ENCODE measurements at regions of chr17 and their contacts with region 1.

Region 1: GRCh38 chr17:76278952-76279741 is 14.0 kb downstream of the UBALD2 start:
- DNase-seq: peak; percentile 97
- ATAC-seq: peak; percentile 94
- H3K4me3 ChIP-seq: no peak overlapping the region
- H3K27ac ChIP-seq: no peak overlapping the region
- H3K4me1 ChIP-seq: peaks cover 13% of the 10 kb centered on the region
- H3K27me3 ChIP-seq: no peaks in the 10 kb centered on the region
- CTCF ChIP-seq: peak; percentile 99

Region 2: DNA sequence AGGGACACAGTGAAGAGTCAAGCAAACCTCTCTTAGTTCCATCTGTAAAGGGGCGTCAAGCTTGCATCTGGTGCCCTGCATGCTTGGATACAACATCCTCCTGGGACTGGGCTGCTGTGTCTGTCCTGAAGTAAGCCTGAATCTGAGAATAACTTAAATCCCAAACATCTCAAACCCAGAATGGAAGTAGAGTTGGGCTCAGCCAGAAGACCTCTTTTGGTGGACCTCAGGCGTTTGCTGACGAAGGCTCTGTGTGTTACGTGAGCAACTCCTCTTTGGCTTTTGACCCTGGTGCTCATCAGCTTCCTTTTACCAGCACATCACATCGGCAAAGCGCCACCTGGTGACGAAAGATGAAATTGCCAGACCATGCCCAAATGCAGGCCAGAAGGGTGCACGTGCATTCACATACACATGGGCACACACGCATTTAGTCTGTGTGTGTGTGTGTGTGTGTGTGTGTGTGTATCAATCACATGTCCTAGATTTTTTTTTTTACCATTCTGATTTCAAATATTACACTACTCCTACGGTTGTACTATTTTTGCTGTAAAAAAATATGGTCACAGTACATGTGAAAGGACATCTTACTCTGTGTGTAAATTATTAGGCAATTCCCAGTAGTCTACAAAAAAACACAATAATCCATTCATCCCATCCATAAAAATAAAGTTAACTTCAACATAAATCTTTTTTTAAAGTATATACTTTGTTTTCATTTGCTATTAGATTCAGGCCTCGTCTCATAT is 97.0 kb before region 1 on chr17:
- CTCF ChIA-PET with region 1: interaction called, 13 read pairs
- POLR2A ChIA-PET with region 1: no interaction called
- intact Hi-C with region 1: no loop called
- DNase-seq: peak; percentile 98
- ATAC-seq: peak; percentile 93
- H3K4me3 ChIP-seq: no peak overlapping the region
- H3K27ac ChIP-seq: no peak overlapping the region
- H3K4me1 ChIP-seq: peaks cover 7% of the 10 kb centered on the region
- H3K27me3 ChIP-seq: no peaks in the 10 kb centered on the region
- CTCF ChIP-seq: peak; percentile 97

Region 3: DNA sequence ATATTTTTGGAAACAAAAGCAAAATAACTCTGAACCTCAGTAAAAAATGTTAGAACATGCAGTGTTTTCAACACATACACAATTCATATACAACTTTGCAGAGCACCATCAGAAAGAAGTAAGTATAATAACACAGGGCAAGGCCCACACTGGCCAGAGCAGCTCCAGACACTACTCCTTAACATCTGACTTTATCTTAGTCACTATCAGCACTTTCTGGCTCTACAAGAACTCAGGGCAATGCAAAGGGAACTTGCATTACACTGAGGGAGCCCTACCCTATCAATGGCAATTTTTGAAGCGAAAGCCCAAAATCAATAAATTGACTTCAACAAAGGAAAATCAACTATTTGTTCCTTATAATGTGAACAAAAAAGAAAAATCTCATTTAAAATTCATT is 55.3 kb before region 1 on chr17:
- CTCF ChIA-PET with region 1: no interaction called
- POLR2A ChIA-PET with region 1: no interaction called
- intact Hi-C with region 1: no loop called
- DNase-seq: no peak
- ATAC-seq: no peak
- H3K4me3 ChIP-seq: no peak overlapping the region
- H3K27ac ChIP-seq: no peak overlapping the region
- H3K4me1 ChIP-seq: no peaks in the 10 kb centered on the region
- H3K27me3 ChIP-seq: no peaks in the 10 kb centered on the region
- CTCF ChIP-seq: no peak

Region 4: DNA sequence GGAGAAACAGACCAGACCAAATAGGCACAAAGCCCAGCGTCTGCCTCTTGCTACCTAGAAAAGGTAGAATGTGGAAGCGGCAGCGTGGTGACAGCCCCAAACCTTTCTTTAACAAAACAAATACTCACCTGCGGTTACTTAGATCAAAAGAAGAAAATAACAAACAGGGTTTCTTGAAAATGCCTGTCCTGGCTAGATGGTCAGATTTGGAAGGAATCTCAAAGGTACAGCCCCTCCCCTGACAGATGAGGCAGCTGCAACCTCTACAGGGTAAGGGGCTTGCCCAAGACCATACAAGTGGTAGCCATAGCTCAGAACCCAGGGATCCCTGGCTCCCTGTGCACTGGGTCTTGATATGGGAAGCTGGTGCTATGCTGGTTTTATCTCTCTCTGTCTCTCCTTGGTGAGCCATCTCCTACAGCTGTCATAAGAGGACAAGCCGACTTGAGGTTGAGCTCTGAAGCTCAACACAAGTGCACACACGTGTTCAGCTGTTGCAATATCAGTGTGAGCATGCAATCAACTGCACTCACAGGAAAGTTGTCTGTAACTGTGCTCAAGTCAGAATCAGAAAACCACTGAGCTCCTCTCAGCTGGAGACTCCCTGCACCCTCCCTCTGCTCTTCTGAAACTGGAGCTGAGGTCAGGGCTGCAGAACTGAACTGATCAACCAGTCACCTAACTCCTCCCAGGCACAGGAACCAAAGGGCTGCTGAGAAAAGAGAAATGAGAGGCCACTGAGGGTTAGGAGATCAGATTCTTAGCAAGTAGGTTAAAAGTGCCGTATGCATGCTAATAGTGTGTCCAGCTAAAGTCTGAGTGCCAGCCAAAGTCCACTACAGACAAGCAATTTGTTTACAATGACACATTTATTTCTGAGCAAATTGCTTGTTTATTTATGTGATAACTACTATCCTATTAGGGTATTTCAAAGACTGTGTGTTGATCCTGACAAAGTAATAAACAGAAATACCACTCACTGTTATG is 32.8 kb before region 1 on chr17:
- CTCF ChIA-PET with region 1: interaction called, 12 read pairs
- POLR2A ChIA-PET with region 1: no interaction called
- intact Hi-C with region 1: loop called (anchors 1 kb)
- DNase-seq: no peak
- ATAC-seq: peak; percentile 56
- H3K4me3 ChIP-seq: no peak overlapping the region
- H3K27ac ChIP-seq: no peak overlapping the region
- H3K4me1 ChIP-seq: peaks cover 20% of the 10 kb centered on the region
- H3K27me3 ChIP-seq: no peaks in the 10 kb centered on the region
- CTCF ChIP-seq: no peak